Dendritic cell treated with granulocyte-macrophage colony-stimulating factor and Interleukin-4, amounts not matched to agents 40 ng/mL and 50 ng/mL, for 4 days (primary cell): ENCODE measurements at regions of chr4 and their contacts with region 1.

Region 1: DNA sequence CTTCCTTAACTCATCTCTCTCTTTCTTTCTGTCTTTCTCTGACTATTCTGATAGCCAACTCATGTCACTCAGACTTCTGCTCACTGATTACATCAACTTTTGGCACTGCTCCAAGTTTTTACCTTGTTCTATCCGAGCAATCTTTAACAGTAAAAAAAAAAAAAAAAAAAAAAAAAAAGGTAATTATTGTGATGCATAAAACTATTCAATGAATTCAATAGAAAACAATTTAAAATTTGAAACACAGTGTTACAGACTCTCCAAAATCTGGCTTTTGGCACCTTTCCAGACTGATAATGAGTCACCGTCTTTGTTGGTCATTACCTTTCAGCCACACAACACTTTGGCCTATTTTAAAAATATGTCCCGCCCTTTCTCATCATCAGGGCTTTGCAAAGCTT is 229.5 kb downstream of the GALNTL6 start:
- H3K4me3 Mint-ChIP-seq: no peak overlapping the region
- H3K27ac Mint-ChIP-seq: no peak overlapping the region
- H3K4me1 Mint-ChIP-seq: no peaks in the 10 kb centered on the region
- H3K27me3 Mint-ChIP-seq: no peaks in the 10 kb centered on the region

Region 2: GRCh38 chr4:172007889-172008288 is 34.8 kb before region 1 on chr4:
- intact Hi-C with region 1: loop called (anchors 2 kb)
- H3K4me3 Mint-ChIP-seq: no peak overlapping the region
- H3K27ac Mint-ChIP-seq: no peak overlapping the region
- H3K4me1 Mint-ChIP-seq: peaks cover 5% of the 10 kb centered on the region
- H3K27me3 Mint-ChIP-seq: no peaks in the 10 kb centered on the region